ENCODE measurements at regions of chr4 and their contacts with region 1.

Region 1: DNA sequence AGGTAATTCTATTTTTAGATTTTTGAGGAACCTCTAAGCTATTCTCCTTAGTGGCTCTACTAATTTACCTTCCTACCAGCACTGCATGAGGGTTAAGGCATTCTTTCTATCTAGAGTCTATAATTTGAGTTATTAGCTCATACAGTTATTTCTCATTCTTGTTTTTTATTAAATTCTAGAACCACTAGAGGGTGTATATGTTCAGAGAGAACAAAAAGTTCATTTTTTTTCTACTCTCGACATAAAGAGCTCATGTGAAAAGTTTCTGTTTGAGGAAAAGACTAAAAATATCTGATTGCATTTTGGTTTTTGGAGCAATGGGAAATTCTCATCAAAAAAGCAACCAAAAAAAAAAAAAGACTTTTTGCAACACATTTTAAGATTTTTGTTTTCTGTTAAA is 57.0 kb upstream of the LRAT start:
- DNase-seq: no peak
- H3K4me3 ChIP-seq: no peak overlapping the region
- CTCF ChIP-seq: no peak
- POLR2A ChIP-seq: no peak

Region 2: DNA sequence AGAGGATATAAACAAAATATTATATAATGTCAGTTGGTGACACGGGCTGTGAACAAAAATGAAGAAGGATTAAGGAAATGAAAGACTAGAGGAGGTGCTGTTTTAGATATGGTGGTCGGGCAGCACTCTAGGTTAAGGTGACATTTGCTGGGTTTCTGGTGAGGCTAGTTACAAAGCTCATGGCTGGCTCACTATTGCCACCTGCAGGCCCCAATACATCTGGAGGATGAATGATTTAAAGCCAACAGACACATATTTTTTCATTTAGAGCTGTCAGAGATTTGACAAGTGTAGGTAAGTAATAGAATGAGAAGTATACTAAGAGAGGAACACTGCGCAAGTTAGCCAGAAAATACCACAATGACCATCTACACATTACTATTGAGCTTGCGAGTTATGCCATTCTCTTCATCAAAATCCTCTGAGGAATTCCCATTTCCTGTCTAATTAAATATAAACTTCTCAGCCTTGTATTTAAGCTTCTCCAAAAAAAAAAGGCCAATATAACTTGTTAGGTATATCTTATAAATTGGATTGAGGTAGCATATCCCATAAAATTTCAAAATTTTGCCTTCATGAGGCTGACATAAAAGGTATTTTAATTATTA is 68.0 kb before region 1 on chr4:
- intact Hi-C with region 1: no loop called
- DNase-seq: no peak
- H3K4me3 ChIP-seq: no peak overlapping the region
- CTCF ChIP-seq: no peak
- POLR2A ChIP-seq: no peak

Region 3: GRCh38 chr4:154720123-154720522 is 33.3 kb after region 1 on chr4:
- intact Hi-C with region 1: loop called (anchors 1 kb)
- DNase-seq: no peak
- H3K4me3 ChIP-seq: no peak overlapping the region
- CTCF ChIP-seq: no peak
- POLR2A ChIP-seq: no peak